Naive thymus-derived CD4-positive, alpha-beta T cell (primary cell): ENCODE measurements at regions of chr6 and their contacts with region 1.

Region 1: DNA sequence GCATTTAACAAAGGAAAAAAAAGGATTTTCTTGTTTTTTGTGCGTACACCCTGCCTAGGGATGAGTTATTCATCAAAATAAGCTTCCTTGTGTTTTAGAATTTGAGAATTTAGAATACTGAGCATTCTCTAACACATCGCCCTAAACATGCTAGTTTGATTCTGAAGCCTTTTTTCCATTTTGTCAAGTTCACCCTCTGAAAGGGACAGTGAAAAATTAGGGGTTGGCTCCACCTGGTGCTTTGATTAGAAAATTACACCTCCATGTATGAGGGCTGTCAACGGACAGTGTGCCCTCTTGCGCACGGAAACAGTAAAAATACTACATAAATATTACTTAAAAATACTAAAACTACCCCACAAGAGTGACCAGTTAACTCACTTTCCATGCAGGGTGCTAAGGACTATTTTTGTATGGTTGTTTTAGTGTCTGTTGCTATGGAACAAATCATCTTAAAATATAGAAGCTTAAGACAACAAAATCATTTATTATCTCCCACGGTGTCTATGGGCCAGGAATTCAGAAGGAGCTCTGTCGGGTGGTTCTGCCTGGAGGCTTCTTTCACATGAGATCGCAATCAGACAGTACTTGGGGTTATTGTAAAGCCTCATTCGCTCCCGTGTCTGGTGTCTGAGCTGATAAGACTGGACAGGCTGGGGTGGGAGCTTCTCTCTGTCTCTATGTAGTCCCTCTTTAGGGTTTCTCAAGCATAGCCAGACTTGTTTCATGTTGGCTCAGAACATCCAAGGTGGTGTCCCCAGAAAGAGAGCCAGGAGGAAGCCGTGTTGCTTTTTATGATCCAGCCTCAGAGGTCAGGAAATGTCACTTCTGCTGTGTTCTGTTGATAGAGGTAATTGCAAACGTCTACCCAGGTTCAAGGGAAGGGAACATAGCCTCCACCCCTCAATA is 41.1 kb upstream of the TMEM170B start:
- DNase-seq: peak; percentile 35 to 85 (median 78)
- ATAC-seq: peak; percentile 95
- H3K4me3 ChIP-seq: no peak overlapping the region
- H3K4me3 Mint-ChIP-seq: no peak overlapping the region
- H3K27ac ChIP-seq: no peak overlapping the region
- H3K27ac Mint-ChIP-seq: no peak overlapping the region
- H3K4me1 ChIP-seq: peaks cover 0 to 10% of the 10 kb centered on the region in 2 donors
- H3K4me1 Mint-ChIP-seq: peaks cover 0 to 3% (median 0%) of the 10 kb centered on the region in 7 donors
- H3K27me3 ChIP-seq: no peaks in the 10 kb centered on the region
- H3K27me3 Mint-ChIP-seq: no peaks in the 10 kb centered on the region

Region 2: DNA sequence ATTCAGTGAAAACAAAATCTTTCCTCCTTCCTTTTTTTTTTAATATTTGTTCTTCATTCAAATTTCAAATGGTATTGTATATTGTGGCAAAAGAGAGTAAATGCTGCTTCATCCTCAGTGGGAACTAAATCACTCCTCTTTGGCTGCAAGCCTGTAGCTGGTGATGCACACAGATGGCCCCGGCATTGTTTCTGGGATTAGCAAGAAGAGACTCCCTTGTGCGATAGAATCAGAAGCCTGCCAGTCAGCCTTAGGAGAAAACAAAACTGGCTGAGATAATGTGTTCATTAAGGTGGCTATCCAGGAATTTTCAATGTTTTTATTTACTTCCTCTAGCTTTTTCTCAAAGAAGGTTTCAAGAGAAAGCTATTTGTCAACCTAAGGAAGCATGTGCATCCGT is 431.6 kb before region 1 on chr6:
- CTCF ChIA-PET with region 1: no interaction called
- POLR2A ChIA-PET with region 1: no interaction called
- intact Hi-C with region 1: loop called (anchors 1 kb)
- DNase-seq: no peak
- ATAC-seq: no peak
- H3K4me3 ChIP-seq: no peak overlapping the region
- H3K4me3 Mint-ChIP-seq: no peak overlapping the region
- H3K27ac ChIP-seq: no peak overlapping the region
- H3K27ac Mint-ChIP-seq: no peak overlapping the region
- H3K4me1 ChIP-seq: no peaks in the 10 kb centered on the region
- H3K4me1 Mint-ChIP-seq: no peaks in the 10 kb centered on the region
- H3K27me3 ChIP-seq: no peaks in the 10 kb centered on the region
- H3K27me3 Mint-ChIP-seq: peaks cover 0 to 19% (median 7%) of the 10 kb centered on the region in 5 donors

Region 3: GRCh38 chr6:11172501-11173332 is 323.7 kb before region 1 on chr6:
- CTCF ChIA-PET with region 1: interaction called, 35 read pairs
- POLR2A ChIA-PET with region 1: interaction called, 3 read pairs
- intact Hi-C with region 1: loop called (anchors 1 kb)
- DNase-seq: peak; percentile 45 to 82 (median 68)
- ATAC-seq: peak; percentile 79
- H3K4me3 ChIP-seq: peak overlapping the region; percentile 25
- H3K4me3 Mint-ChIP-seq: peak overlapping the region in 8 of 10 donors; percentile 6 to 64 (median 53)
- H3K27ac ChIP-seq: no peak overlapping the region
- H3K27ac Mint-ChIP-seq: peak overlapping the region in 2 of 9 donors; percentile 12 to 16
- H3K4me1 ChIP-seq: peaks cover 6 to 10% of the 10 kb centered on the region in 2 donors
- H3K4me1 Mint-ChIP-seq: peaks cover 2 to 14% (median 10%) of the 10 kb centered on the region in 7 donors
- H3K27me3 ChIP-seq: no peaks in the 10 kb centered on the region
- H3K27me3 Mint-ChIP-seq: no peaks in the 10 kb centered on the region

Region 4: GRCh38 chr6:11414176-11414963 is 82.0 kb before region 1 on chr6:
- CTCF ChIA-PET with region 1: no interaction called
- POLR2A ChIA-PET with region 1: no interaction called
- intact Hi-C with region 1: loop called in 1 of 2 experiments (anchors 5 kb)
- DNase-seq: peak in 6 of 9 donors; percentile 11 to 30 (median 18)
- ATAC-seq: peak; percentile 77
- H3K4me3 ChIP-seq: no peak overlapping the region
- H3K4me3 Mint-ChIP-seq: no peak overlapping the region
- H3K27ac ChIP-seq: no peak overlapping the region
- H3K27ac Mint-ChIP-seq: peak overlapping the region in 1 of 9 donors; percentile 10
- H3K4me1 ChIP-seq: peaks cover 0 to 4% of the 10 kb centered on the region in 2 donors
- H3K4me1 Mint-ChIP-seq: peaks cover 6 to 45% (median 10%) of the 10 kb centered on the region in 7 donors
- H3K27me3 ChIP-seq: no peaks in the 10 kb centered on the region
- H3K27me3 Mint-ChIP-seq: no peaks in the 10 kb centered on the region

Region 5: DNA sequence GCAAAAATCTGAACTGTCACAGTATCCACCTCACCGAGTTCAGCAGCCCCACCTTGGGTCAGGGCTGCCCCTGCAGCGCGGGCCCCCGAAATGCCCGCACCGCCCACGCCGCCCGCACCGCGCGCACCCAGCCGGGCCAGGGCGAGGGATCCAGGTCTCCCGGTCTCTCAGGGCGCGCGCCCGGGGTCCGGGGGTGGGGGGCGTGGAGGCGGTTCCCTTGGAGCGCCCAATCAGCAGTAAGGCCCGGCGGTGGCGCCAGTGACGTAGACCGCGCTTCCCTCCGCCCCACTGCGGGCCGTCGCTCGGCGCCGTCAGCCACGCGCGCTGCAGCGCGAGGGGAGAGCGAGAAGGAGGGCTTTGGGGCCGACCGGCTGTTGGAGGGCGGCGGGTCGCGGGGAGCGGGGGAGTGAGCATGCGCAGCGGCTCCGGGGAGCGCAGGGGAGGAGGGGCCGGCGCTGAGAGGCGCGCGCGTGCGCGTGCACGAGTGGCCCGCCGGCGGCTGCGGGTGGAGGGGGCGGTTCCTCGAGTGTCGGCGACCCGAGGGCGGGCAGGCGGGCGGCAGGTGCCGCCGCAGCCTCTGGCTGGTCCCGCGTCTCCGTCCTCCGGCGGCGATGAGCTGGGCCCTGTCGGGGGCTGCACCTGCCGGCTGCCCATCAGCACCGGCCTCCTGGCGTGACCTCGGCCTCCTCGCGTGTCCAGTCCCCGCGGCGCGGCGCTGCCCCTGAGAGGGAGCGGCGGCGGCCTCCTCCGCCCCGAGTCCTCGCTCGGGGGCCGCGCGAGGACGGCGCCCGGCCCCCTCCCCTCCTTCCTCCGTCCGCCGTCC is 41.0 kb after region 1 on chr6 and contains the start of gene TMEM170B:
- CTCF ChIA-PET with region 1: interaction called, 4 read pairs
- POLR2A ChIA-PET with region 1: no interaction called
- intact Hi-C with region 1: loop called in 1 of 2 experiments (anchors 2 kb)
- DNase-seq: peak; percentile 94 to 99 (median 98)
- ATAC-seq: peak; percentile 95
- H3K4me3 ChIP-seq: peak within 1 kb of the TSS; percentile 62
- H3K4me3 Mint-ChIP-seq: peak within 1 kb of the TSS; percentile 82 to 90 (median 88)
- H3K27ac ChIP-seq: peak within 1 kb of the TSS; percentile 76
- H3K27ac Mint-ChIP-seq: peak within 1 kb of the TSS in 8 of 9 donors; percentile 67 to 93 (median 83)
- H3K4me1 ChIP-seq: peaks cover 4 to 5% of the 10 kb centered on the region in 2 donors
- H3K4me1 Mint-ChIP-seq: peaks cover 6 to 28% (median 19%) of the 10 kb centered on the region in 7 donors
- H3K27me3 ChIP-seq: no peaks in the 10 kb centered on the region
- H3K27me3 Mint-ChIP-seq: peaks cover 0 to 76% (median 7%) of the 10 kb centered on the region in 5 donors
- total RNA-seq, gene TMEM170B: 0.29 to 12.7 (median 3.4) TPM